ENCODE measurements at regions of chr6 and their contacts with region 1.

Region 1: GRCh38 chr6:16420715-16421461 is 182.5 kb downstream of the GMPR start:
- DNase-seq: peak; percentile 75 to 86 (median 76)
- H3K4me3 ChIP-seq: peak overlapping the region; percentile 24 to 32
- H3K4me3 Mint-ChIP-seq: peak overlapping the region; percentile 73 to 92 (median 84)
- H3K27ac ChIP-seq: peak overlapping the region; percentile 69
- H3K27ac Mint-ChIP-seq: peak overlapping the region; percentile 92 to 99 (median 99)
- H3K4me1 ChIP-seq: peaks cover 53% of the 10 kb centered on the region
- H3K4me1 Mint-ChIP-seq: peaks cover 55 to 72% (median 60%) of the 10 kb centered on the region in 4 donors
- H3K27me3 ChIP-seq: no peaks in the 10 kb centered on the region
- H3K27me3 Mint-ChIP-seq: no peaks in the 10 kb centered on the region

Region 2: GRCh38 chr6:16409531-16410441 is 11.1 kb before region 1 on chr6:
- CTCF ChIA-PET with region 1: interaction called, 47 read pairs
- POLR2A ChIA-PET with region 1: interaction called, 10 read pairs
- intact Hi-C with region 1: no loop called
- DNase-seq: peak; percentile 45 to 78 (median 54)
- H3K4me3 ChIP-seq: no peak overlapping the region
- H3K4me3 Mint-ChIP-seq: peak overlapping the region in 7 of 8 donors; percentile 49 to 71 (median 68)
- H3K27ac ChIP-seq: no peak overlapping the region
- H3K27ac Mint-ChIP-seq: peak overlapping the region in 6 of 7 donors; percentile 7 to 78 (median 68)
- H3K4me1 ChIP-seq: peaks cover 22% of the 10 kb centered on the region
- H3K4me1 Mint-ChIP-seq: peaks cover 33 to 61% (median 48%) of the 10 kb centered on the region in 4 donors
- H3K27me3 ChIP-seq: no peaks in the 10 kb centered on the region
- H3K27me3 Mint-ChIP-seq: no peaks in the 10 kb centered on the region

Region 3: GRCh38 chr6:16437984-16438383 is 17.1 kb after region 1 on chr6:
- CTCF ChIA-PET with region 1: interaction called, 5 read pairs
- POLR2A ChIA-PET with region 1: interaction called, 9 read pairs
- intact Hi-C with region 1: loop called (anchors 2 kb)
- DNase-seq: peak in 2 of 5 donors; percentile 33 to 53
- H3K4me3 ChIP-seq: peak overlapping the region in 1 of 2 donors; percentile 40
- H3K4me3 Mint-ChIP-seq: peak overlapping the region; percentile 38 to 89 (median 78)
- H3K27ac ChIP-seq: peak overlapping the region; percentile 55
- H3K27ac Mint-ChIP-seq: peak overlapping the region; percentile 91 to 99 (median 98)
- H3K4me1 ChIP-seq: peaks cover 82% of the 10 kb centered on the region
- H3K4me1 Mint-ChIP-seq: peaks cover 64 to 89% (median 76%) of the 10 kb centered on the region in 4 donors
- H3K27me3 ChIP-seq: no peaks in the 10 kb centered on the region
- H3K27me3 Mint-ChIP-seq: no peaks in the 10 kb centered on the region

Measured in CD4-positive, alpha-beta memory T cell (primary cell).